Endothelial cell of umbilical vein (primary cell): ENCODE measurements at regions of chr17 and their contacts with region 1.

Region 1: GRCh38 chr17:64707019-64707591 is 45.0 kb upstream of the SMURF2 start:
- DNase-seq: peak; percentile 100
- H3K4me3 ChIP-seq: no peak overlapping the region
- H3K27ac ChIP-seq: peak overlapping the region; percentile 99
- H3K4me1 ChIP-seq: peaks cover 44% of the 10 kb centered on the region
- H3K27me3 ChIP-seq: no peaks in the 10 kb centered on the region
- CTCF ChIP-seq: no peak
- POLR2A ChIP-seq: peak; percentile 62

Region 2: DNA sequence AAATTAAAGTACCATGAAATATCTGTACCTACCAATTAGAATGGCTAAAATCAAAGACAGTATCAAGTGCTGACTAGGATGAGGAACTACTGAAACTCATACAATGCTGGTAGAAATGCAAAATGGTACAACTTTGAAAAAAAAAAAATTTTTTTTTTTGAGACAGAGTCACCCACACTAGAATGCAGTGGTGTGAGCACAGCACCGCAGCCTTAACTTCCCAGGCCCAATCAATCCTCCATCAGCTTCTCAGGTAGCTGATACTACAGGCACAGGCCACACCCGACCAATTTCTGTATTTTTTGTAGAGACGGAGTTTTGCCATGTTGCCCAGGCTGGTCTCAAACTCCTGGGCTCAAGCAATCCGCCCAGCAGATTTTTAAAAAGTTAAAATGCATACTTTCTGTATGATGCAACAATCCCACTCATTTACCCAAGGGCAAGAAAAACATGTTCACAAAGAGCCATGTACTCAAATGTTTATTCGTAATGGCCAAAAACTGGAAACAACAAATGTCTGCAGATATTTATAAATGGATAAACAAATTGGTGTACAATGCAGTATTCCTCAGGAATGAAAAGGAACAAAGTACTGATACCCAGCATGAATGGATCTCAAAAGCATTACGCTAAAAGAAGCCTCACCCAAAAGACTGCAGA is 53.6 kb before region 1 on chr17:
- CTCF ChIA-PET with region 1: interaction called, 15 read pairs
- POLR2A ChIA-PET with region 1: interaction called, 3 read pairs
- dilution Hi-C with region 1: no loop called
- intact Hi-C with region 1: no loop called
- DNase-seq: no peak
- H3K4me3 ChIP-seq: no peak overlapping the region
- H3K27ac ChIP-seq: peak overlapping the region; percentile 26
- H3K4me1 ChIP-seq: peaks cover 48% of the 10 kb centered on the region
- H3K27me3 ChIP-seq: no peaks in the 10 kb centered on the region
- CTCF ChIP-seq: no peak
- POLR2A ChIP-seq: no peak

Region 3: DNA sequence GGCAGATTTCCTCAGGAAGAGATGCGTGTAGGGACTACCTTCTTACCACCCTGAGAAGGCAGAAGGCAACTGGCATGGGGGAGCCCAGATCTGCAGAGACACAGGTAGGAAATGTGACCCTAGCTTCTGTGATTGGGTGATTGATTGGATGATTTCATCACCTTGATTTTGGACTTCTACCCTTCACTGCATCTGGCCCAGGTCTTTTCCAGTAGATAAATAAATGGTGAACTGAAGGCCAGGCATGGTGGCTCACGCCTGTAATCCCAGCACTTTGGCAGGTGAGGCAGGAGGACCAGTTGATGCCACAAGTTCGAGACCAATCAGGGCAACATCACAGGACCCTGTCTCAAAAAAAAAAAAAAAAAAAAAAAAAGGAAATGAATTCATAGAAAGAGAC is 30.3 kb before region 1 on chr17:
- CTCF ChIA-PET with region 1: no interaction called
- POLR2A ChIA-PET with region 1: interaction called, 9 read pairs
- dilution Hi-C with region 1: no loop called
- intact Hi-C with region 1: loop called (anchors 1 kb)
- DNase-seq: no peak
- H3K4me3 ChIP-seq: no peak overlapping the region
- H3K27ac ChIP-seq: no peak overlapping the region
- H3K4me1 ChIP-seq: peaks cover 15% of the 10 kb centered on the region
- H3K27me3 ChIP-seq: no peaks in the 10 kb centered on the region
- CTCF ChIP-seq: no peak
- POLR2A ChIP-seq: no peak

Region 4: GRCh38 chr17:64736804-64737492 is 29.8 kb after region 1 on chr17:
- CTCF ChIA-PET with region 1: interaction called, 22 read pairs
- POLR2A ChIA-PET with region 1: interaction called, 7 read pairs
- dilution Hi-C with region 1: no loop called
- intact Hi-C with region 1: loop called (anchors 1 kb)
- DNase-seq: peak; percentile 75
- H3K4me3 ChIP-seq: no peak overlapping the region
- H3K27ac ChIP-seq: no peak overlapping the region
- H3K4me1 ChIP-seq: peaks cover 42% of the 10 kb centered on the region
- H3K27me3 ChIP-seq: no peaks in the 10 kb centered on the region
- CTCF ChIP-seq: peak; percentile 66 to 71
- POLR2A ChIP-seq: no peak